ENCODE measurements at regions of chr9 and their contacts with region 1.

Region 1: GRCh38 chr9:97710356-97711222 is 13.4 kb upstream of the XPA start:
- DNase-seq: no peak
- ATAC-seq: peak; percentile 96
- H3K4me3 ChIP-seq: no peak overlapping the region
- H3K27ac ChIP-seq: no peak overlapping the region
- H3K4me1 ChIP-seq: peaks cover 5% of the 10 kb centered on the region
- H3K27me3 ChIP-seq: peaks cover 1 to 2% of the 10 kb centered on the region in 2 experiments; a peak in 1 of 4 replicates
- CTCF ChIP-seq: peak; percentile 72 to 85 (median 85)
- EP300 ChIP-seq: no peak
- POLR2A ChIP-seq: no peak
- RAD21 ChIP-seq: peak; percentile 85

Region 2: GRCh38 chr9:97651646-97652045 is 58.9 kb before region 1 on chr9:
- CTCF ChIA-PET with region 1: no interaction called
- POLR2A ChIA-PET with region 1: no interaction called
- RAD21 ChIA-PET with region 1: no interaction called
- SMC1A ChIA-PET with region 1: no interaction called
- in situ Hi-C with region 1: no loop called
- intact Hi-C with region 1: no loop called
- DNase-seq: no peak
- ATAC-seq: no peak
- H3K4me3 ChIP-seq: no peak overlapping the region
- H3K27ac ChIP-seq: no peak overlapping the region
- H3K4me1 ChIP-seq: no peaks in the 10 kb centered on the region
- H3K27me3 ChIP-seq: no peaks in the 10 kb centered on the region
- CTCF ChIP-seq: no peak
- EP300 ChIP-seq: no peak
- POLR2A ChIP-seq: no peak
- RAD21 ChIP-seq: no peak

Region 3: DNA sequence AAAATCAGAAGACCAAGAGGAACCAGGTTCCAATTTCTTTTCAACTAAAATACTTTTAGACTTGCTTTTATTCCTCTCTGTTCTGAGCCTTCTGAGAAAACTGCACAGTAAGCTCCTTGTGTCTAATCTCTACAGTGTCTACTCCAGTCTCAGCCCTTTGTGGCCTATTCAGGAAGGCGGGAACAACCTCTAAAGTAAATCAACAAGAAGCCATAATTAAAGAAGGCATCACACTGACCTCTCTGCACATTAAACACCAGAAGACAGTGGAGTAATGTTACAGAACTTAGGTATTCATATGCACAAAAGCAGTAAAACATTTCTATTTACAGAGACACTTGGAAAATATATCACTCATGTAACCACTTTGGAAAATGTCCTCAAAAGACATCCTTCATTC is 28.3 kb before region 1 on chr9:
- CTCF ChIA-PET with region 1: no interaction called
- POLR2A ChIA-PET with region 1: no interaction called
- RAD21 ChIA-PET with region 1: no interaction called
- SMC1A ChIA-PET with region 1: no interaction called
- in situ Hi-C with region 1: no loop called
- intact Hi-C with region 1: no loop called
- DNase-seq: no peak
- ATAC-seq: no peak
- H3K4me3 ChIP-seq: no peak overlapping the region
- H3K27ac ChIP-seq: no peak overlapping the region
- H3K4me1 ChIP-seq: no peaks in the 10 kb centered on the region
- H3K27me3 ChIP-seq: no peaks in the 10 kb centered on the region
- CTCF ChIP-seq: no peak
- EP300 ChIP-seq: no peak
- POLR2A ChIP-seq: no peak
- RAD21 ChIP-seq: no peak

Region 4: DNA sequence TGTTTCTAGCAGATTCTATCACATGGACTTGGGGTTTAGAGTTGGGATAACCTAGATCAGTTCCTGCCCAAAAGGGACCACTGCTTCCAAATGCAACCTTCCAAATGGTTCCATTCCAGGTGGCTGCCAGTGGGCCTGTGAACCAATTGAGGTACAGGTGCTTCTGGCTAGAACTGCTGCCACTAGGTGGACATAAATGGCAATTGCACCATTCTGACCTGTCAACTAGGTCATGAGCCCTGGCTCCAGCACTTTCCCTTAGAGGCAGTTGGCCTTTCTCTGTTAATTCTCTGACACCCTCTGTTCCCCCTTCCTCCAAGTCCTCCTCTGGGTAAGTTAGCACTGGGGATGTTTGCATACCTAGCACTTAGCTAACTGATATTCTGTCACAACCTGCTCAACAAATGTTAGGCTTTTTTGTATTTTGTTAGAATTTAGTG is 244.0 kb after region 1 on chr9:
- CTCF ChIA-PET with region 1: no interaction called
- POLR2A ChIA-PET with region 1: no interaction called
- RAD21 ChIA-PET with region 1: no interaction called
- SMC1A ChIA-PET with region 1: no interaction called
- in situ Hi-C with region 1: no loop called
- intact Hi-C with region 1: loop called (anchors 2 kb)
- DNase-seq: no peak
- ATAC-seq: peak; percentile 97
- H3K4me3 ChIP-seq: no peak overlapping the region
- H3K27ac ChIP-seq: no peak overlapping the region
- H3K4me1 ChIP-seq: no peaks in the 10 kb centered on the region
- H3K27me3 ChIP-seq: no peaks in the 10 kb centered on the region
- CTCF ChIP-seq: peak; percentile 75 to 89 (median 76)
- EP300 ChIP-seq: no peak
- POLR2A ChIP-seq: no peak
- RAD21 ChIP-seq: peak; percentile 64